Calu3 (cell line): ENCODE measurements at regions of chr11 and their contacts with region 1.

Region 1: DNA sequence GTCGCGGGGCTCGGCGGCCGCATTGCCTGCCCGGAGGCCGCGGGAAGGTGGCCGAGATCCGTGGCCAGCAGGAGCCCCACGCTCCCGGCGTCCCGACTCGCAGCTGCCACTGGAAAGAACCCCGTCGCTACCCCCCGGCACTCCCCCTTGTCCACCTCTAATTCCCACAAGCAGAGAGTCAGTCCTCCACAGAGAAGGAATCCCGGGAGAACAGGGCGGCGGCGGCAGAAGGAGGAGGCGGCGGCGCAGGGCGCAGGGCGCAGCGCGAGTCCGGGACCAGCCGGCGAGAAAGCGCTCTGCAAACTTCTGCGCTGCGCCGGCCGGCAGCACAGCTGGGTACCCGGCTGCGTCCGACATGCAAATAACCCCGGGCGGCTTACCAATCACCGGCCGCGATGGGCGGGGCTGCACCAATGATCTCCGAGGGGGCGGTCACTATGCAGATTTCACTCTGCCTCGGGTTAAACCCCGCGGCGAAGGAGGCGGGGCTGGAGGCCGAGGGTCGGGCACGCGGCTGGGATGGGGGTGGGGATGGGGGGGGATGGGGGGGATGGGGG is at the start of gene ABTB2:
- DNase-seq: peak; percentile 99
- H3K4me3 Mint-ChIP-seq: peak within 1 kb of the TSS; percentile 82
- H3K27ac Mint-ChIP-seq: peak within 1 kb of the TSS; percentile 82
- H3K4me1 Mint-ChIP-seq: peaks cover 45% of the 10 kb centered on the region
- H3K27me3 Mint-ChIP-seq: no peaks in the 10 kb centered on the region
- CTCF ChIP-seq: no peak
- total RNA-seq, gene ABTB2: 24.6 and 24.8 TPM in 2 replicates

Region 2: DNA sequence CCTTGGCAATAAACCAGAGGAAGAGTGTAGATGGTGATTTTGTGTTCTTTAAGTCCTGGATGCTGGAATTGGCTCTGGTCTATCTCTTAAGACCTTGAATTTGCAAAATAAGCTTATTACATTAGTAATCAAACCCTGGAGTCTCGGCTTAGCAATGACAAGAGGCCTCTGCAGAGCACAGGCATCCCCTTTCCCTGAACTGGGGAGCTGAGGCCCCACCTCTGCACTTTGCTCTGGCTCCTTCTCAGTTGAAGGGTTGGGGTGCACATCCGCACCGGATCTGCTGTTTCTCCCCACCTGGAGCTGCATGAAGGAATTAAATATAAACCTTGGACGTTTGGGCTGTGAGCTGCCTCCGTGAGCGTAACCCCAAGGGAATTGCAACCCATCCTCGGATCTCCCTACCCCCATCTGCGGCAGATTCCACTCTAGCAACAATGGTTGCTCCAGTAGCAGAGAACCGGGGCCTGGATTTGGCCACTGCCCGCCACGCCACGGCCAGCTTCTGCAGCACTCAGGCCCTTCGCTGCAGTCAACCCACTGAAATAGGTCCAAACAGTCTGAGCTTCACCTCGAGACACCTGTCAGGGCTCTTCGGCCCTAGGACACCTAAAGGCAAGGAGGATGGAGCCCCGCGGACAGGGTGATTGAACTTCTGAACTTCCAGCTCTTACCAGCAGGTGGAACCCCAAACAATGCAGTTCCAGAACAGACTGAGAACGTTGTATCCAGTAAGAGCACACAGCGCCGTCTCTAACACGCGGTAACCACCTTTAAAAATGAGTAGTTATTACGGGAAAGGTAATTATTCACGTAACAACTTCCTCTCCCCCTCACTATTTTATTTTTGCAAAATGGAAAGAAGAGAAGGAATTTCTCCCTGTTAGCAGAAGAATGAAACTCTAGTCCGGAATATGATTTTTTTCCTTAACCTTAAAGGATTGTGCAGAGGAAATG is 361.0 kb before region 1 on chr11:
- CTCF ChIA-PET with region 1: interaction called, 3 read pairs
- intact Hi-C with region 1: loop called (anchors 1 kb)
- DNase-seq: peak; percentile 84
- H3K4me3 Mint-ChIP-seq: peak overlapping the region; percentile 36
- H3K27ac Mint-ChIP-seq: no peak overlapping the region
- H3K4me1 Mint-ChIP-seq: peaks cover 10% of the 10 kb centered on the region
- H3K27me3 Mint-ChIP-seq: no peaks in the 10 kb centered on the region
- CTCF ChIP-seq: peak; percentile 73

Region 3: GRCh38 chr11:34174412-34175041 is 183.3 kb before region 1 on chr11:
- CTCF ChIA-PET with region 1: interaction called, 37 read pairs
- intact Hi-C with region 1: loop called (anchors 1 kb)
- DNase-seq: peak; percentile 91
- H3K4me3 Mint-ChIP-seq: peak overlapping the region; percentile 69
- H3K27ac Mint-ChIP-seq: peak overlapping the region; percentile 45
- H3K4me1 Mint-ChIP-seq: peaks cover 18% of the 10 kb centered on the region
- H3K27me3 Mint-ChIP-seq: no peaks in the 10 kb centered on the region
- CTCF ChIP-seq: peak; percentile 95

Region 4: DNA sequence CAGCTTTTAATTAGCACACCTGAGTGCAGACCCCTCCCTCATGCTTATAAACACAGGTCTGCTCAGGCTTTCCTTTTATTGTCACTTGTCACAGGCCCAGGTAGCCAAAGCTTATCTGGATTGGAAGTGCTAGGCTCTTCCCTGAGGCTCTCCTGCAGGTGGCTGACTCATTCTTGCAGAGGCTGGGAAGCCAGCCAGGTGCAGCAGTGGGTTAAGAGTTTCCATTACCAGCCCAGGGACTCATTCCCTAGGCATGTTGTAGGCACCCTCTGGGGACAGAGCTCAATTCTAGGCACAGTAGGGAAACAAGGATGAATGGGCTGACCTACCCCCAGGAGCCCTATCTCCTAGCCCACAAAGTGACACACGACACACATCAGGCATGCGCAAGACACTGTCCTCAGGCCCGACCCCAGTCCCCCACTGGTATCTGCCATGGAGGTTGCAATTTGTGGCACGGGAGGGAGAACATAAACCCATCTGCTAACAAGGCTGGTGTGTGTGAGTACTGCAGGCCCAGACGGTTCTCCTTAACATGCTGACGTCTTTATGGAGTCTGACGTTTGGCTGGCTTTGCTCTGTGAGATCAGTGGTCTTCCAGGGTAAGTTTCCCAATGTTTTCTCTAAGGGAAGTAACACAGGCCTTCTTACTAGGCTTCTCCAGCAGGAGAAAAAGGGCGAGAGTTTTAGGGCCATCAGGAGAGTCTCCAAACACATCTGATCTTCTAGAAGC is 94.2 kb before region 1 on chr11:
- CTCF ChIA-PET with region 1: interaction called, 15 read pairs
- intact Hi-C with region 1: loop called (anchors 5 kb)
- DNase-seq: peak; percentile 89
- H3K4me3 Mint-ChIP-seq: peak overlapping the region; percentile 62
- H3K27ac Mint-ChIP-seq: peak overlapping the region; percentile 98
- H3K4me1 Mint-ChIP-seq: peaks cover 65% of the 10 kb centered on the region
- H3K27me3 Mint-ChIP-seq: no peaks in the 10 kb centered on the region
- CTCF ChIP-seq: no peak